Astrocyte of the cerebellum (primary cell): ENCODE measurements at regions of chr14 and their contacts with region 1.

Region 1: DNA sequence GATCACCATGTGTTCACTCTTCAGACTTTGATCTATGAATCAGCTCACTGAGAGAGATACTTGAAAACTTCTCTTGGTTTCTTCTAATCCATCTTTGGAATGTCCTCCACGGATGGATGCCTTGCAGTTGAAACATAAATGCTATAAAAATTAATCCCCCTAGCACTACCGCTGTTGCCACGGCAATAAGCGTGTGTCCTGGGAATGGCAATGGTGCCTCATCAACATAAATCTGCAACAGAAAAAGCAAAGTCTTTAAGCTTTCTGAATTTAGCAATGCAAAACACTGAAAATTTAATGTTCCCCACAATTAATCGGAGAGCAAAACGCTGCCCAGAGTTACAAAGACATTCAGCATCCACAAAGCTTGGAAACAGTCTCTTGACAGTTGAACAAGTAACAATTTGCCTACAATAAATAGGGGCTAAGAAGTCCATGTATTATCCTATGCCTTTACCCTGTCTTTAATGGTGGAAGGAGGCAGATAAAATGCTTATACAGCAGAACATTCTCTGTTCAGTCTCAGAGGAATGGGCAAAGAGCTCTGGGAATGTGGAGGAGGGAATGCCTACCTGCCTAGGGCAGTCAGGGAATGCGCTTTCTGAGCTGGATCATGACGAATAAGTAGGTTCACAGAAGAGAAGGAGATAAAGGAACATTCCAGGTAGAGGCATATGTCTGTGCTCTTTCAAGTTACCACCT is 70.9 kb upstream of the PPP4R3A start:
- DNase-seq: no peak
- H3K4me3 ChIP-seq: no peak overlapping the region
- CTCF ChIP-seq: no peak

Region 2: GRCh38 chr14:91624757-91625156 is 43.7 kb after region 1 on chr14:
- in situ Hi-C with region 1: loop called (anchors 5 kb)
- DNase-seq: no peak
- H3K4me3 ChIP-seq: no peak overlapping the region
- CTCF ChIP-seq: no peak

Region 3: DNA sequence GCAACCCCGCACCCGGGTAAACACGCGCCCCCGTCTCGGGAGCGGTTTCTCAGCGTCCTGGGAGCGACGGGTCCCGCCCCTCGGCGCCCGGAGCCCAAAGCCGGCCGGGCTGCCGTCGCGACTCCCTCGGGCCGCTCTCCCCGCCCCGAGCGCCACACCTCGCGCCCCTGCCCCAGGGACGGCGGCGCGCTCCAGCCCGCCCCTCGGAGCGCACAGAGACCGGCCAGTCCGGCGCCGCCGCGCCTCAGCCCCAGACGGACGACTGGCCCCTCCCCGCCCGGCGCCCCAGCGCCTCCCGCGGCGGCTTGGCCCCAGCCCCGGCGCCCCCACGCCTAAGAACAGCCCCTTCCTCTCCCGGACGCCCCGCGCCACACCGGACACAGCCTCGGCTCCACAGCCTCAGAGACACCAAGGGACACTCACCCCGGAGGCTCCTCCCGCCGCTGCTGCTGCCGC is 1751.4 kb after region 1 on chr14:
- in situ Hi-C with region 1: no loop called
- DNase-seq: no peak
- H3K4me3 ChIP-seq: peak overlapping the region; percentile 69
- CTCF ChIP-seq: no peak